ENCODE measurements at regions of chrX and their contacts with region 1.

Region 1: DNA sequence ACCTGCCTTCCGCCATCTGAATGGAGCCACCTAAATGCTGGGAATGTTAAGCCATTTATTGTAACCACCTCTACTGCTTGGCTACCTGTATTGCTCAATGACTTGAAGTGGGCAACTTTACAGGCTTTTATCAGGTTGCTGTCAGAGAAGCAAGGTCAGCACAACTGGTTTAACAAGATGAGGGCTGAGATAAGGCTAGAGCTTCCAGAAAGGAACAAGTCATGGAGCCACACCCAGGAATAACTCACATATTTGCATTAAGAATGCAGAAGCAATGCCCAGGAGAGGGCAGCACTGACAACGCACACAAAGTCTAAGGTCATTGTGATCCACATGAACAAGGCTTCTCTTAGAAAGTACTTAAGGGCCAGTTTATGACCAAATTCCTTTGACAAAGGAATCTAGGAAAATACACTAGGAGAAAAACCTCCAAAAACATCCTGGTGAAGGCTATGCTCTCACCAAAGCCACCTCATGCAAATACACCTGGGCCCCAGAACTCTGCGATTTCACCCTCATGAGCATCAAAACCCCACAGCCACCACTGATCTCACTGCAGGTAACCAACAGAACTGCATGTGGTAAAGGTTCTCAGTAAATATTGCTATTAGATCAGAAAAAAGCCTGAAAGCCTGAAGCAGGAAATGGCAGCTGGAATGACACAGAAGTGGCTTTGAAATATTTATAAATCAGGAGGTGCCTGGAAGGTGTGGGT is 15.0 kb upstream of the STS start:
- DNase-seq: peak; percentile 53
- ATAC-seq: no peak
- H3K4me3 Mint-ChIP-seq: no peak overlapping the region
- H3K27ac Mint-ChIP-seq: peak overlapping the region; percentile 47
- H3K4me1 Mint-ChIP-seq: peaks cover 27% of the 10 kb centered on the region
- H3K27me3 Mint-ChIP-seq: no peaks in the 10 kb centered on the region

Region 2: DNA sequence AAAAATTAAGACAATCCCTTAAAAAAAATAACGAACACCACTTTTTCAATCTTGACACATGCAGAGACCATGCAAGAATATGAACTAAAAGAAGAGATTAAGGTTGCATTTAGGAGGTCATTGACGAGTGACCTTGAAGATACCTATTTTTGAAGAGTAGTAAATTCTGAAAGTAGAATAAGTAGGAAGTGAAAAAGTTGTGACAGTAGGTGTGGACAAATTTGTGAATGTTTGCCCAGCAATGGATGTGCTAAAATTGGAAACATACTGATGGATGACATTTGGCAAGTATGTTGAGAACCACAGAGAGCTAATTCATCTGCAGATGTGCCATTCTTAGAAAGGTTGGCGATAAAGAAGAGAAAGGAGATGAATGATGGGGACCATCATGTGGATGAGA is 383.9 kb before region 1 on chrX:
- CTCF ChIA-PET with region 1: no interaction called
- POLR2A ChIA-PET with region 1: no interaction called
- intact Hi-C with region 1: no loop called
- DNase-seq: no peak
- ATAC-seq: no peak
- H3K4me3 Mint-ChIP-seq: no peak overlapping the region
- H3K27ac Mint-ChIP-seq: no peak overlapping the region
- H3K4me1 Mint-ChIP-seq: no peaks in the 10 kb centered on the region
- H3K27me3 Mint-ChIP-seq: no peaks in the 10 kb centered on the region

Region 3: GRCh38 chrX:7170903-7171302 is 38.4 kb after region 1 on chrX:
- CTCF ChIA-PET with region 1: no interaction called
- POLR2A ChIA-PET with region 1: no interaction called
- intact Hi-C with region 1: loop called in 1 of 2 experiments (anchors 2 kb)
- DNase-seq: peak; percentile 54
- ATAC-seq: no peak
- H3K4me3 Mint-ChIP-seq: no peak overlapping the region
- H3K27ac Mint-ChIP-seq: no peak overlapping the region
- H3K4me1 Mint-ChIP-seq: no peaks in the 10 kb centered on the region
- H3K27me3 Mint-ChIP-seq: no peaks in the 10 kb centered on the region

Region 4: GRCh38 chrX:7606039-7606652 is 473.7 kb after region 1 on chrX:
- CTCF ChIA-PET with region 1: no interaction called
- POLR2A ChIA-PET with region 1: no interaction called
- intact Hi-C with region 1: no loop called
- DNase-seq: no peak
- ATAC-seq: no peak
- H3K4me3 Mint-ChIP-seq: no peak overlapping the region
- H3K27ac Mint-ChIP-seq: no peak overlapping the region
- H3K4me1 Mint-ChIP-seq: no peaks in the 10 kb centered on the region
- H3K27me3 Mint-ChIP-seq: no peaks in the 10 kb centered on the region

Measured in activated CD4-positive, alpha-beta T cell treated with anti-CD3 and anti-CD28 coated beads for 36 hours (primary cell).